Colonic mucosa (tissue), 4 donors: ENCODE measurements at regions of chr2 and their contacts with region 1.

Region 1: GRCh38 chr2:126527836-126528507 is 128.0 kb upstream of the GYPC start:
- DNase-seq: peak; percentile 57
- H3K4me3 ChIP-seq: no peak overlapping the region
- H3K27ac ChIP-seq: no peak overlapping the region
- H3K4me1 ChIP-seq: no peaks in the 10 kb centered on the region
- H3K27me3 ChIP-seq: no peaks in the 10 kb centered on the region
- CTCF ChIP-seq: no peak

Region 2: DNA sequence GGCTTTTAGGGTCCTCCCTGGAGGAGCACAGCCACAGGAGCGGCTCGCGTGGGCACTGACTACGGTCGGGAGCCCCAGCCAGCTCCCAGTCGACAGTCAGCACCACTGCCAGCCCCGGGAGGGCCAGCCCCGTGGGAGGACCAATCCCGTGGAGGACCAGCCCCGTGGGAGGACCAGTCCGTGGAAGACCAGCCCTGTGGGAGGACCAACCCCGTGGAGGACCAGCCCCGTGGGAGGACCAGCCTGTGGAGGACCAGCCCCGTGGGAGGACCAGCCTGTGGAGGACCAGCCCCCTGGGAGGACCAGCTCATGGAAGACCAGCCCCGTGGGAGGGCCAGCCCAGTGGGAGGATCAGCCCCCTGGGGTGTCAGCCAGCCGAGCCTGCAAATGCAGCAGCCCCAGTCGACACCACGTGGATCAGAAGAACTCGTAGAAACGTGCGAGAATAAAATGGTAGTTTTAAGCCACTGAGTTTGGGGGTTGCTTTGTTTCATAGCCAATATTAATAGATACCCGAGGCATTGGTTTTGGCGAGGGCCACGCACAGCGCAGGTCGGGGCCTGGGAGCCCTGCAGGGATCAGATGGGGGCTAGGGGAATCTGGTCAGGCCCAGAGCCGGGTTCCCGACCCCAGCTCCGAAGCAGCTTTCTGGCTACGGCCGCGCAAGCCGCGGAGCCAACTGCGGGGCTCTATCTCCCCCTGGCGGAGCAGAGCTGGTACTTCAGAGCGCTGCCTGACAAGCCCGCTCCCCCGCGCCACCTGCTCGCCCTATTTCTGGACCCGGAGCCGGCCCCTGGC is 443.7 kb after region 1 on chr2:
- intact Hi-C with region 1: loop called (anchors 5 kb)
- DNase-seq: peak; percentile 63
- H3K4me3 ChIP-seq: peak overlapping the region; percentile 49
- H3K27ac ChIP-seq: no peak overlapping the region
- H3K4me1 ChIP-seq: peaks cover 4% of the 10 kb centered on the region
- H3K27me3 ChIP-seq: no peaks in the 10 kb centered on the region
- CTCF ChIP-seq: peak; percentile 94